ENCODE measurements at regions of chr12 and their contacts with region 1.

Region 1: GRCh38 chr12:9813821-9814809 is 13.2 kb upstream of the KLRF1 start:
- DNase-seq: peak; percentile 82 to 92 (median 87)
- H3K4me3 ChIP-seq: peak overlapping the region; percentile 54
- H3K4me3 Mint-ChIP-seq: peak overlapping the region; percentile 81 to 93 (median 87)
- H3K27ac ChIP-seq: no peak overlapping the region
- H3K27ac Mint-ChIP-seq: peak overlapping the region; percentile 51 to 90 (median 84)
- H3K4me1 ChIP-seq: peaks cover 6% of the 10 kb centered on the region
- H3K4me1 Mint-ChIP-seq: peaks cover 10 to 18% (median 12%) of the 10 kb centered on the region in 3 donors
- H3K27me3 ChIP-seq: no peaks in the 10 kb centered on the region
- H3K27me3 Mint-ChIP-seq: peaks cover 3 to 20% of the 10 kb centered on the region in 2 donors

Region 2: GRCh38 chr12:9750276-9751203 is 63.6 kb before region 1 on chr12:
- CTCF ChIA-PET with region 1: interaction called, 104 read pairs
- POLR2A ChIA-PET with region 1: interaction called, 5 read pairs
- DNase-seq: peak; percentile 26 to 75 (median 65)
- H3K4me3 ChIP-seq: no peak overlapping the region
- H3K4me3 Mint-ChIP-seq: peak overlapping the region; percentile 28 to 74 (median 66)
- H3K27ac ChIP-seq: no peak overlapping the region
- H3K27ac Mint-ChIP-seq: peak overlapping the region in 6 of 8 donors; percentile 11 to 88 (median 58)
- H3K4me1 ChIP-seq: peaks cover 49% of the 10 kb centered on the region
- H3K4me1 Mint-ChIP-seq: peaks cover 47 to 54% (median 54%) of the 10 kb centered on the region in 3 donors
- H3K27me3 ChIP-seq: no peaks in the 10 kb centered on the region
- H3K27me3 Mint-ChIP-seq: peaks cover 0 to 2% of the 10 kb centered on the region in 2 donors

Region 3: GRCh38 chr12:9797722-9798619 is 16.1 kb before region 1 on chr12:
- CTCF ChIA-PET with region 1: interaction called, 34 read pairs
- POLR2A ChIA-PET with region 1: interaction called, 4 read pairs
- DNase-seq: peak; percentile 26 to 83 (median 71)
- H3K4me3 ChIP-seq: no peak overlapping the region
- H3K4me3 Mint-ChIP-seq: peak overlapping the region in 4 of 7 donors; percentile 11 to 38 (median 25)
- H3K27ac ChIP-seq: no peak overlapping the region
- H3K27ac Mint-ChIP-seq: peak overlapping the region in 6 of 8 donors; percentile 1 to 96 (median 76)
- H3K4me1 ChIP-seq: peaks cover 52% of the 10 kb centered on the region
- H3K4me1 Mint-ChIP-seq: peaks cover 48 to 54% (median 48%) of the 10 kb centered on the region in 3 donors
- H3K27me3 ChIP-seq: no peaks in the 10 kb centered on the region
- H3K27me3 Mint-ChIP-seq: no peaks in the 10 kb centered on the region

Region 4: GRCh38 chr12:9925708-9926393 is 111.7 kb after region 1 on chr12:
- CTCF ChIA-PET with region 1: interaction called, 52 read pairs
- POLR2A ChIA-PET with region 1: interaction called, 5 read pairs
- DNase-seq: peak in 2 of 5 donors; percentile 32 to 53
- H3K4me3 ChIP-seq: peak overlapping the region; percentile 19
- H3K4me3 Mint-ChIP-seq: peak overlapping the region in 6 of 7 donors; percentile 62 to 91 (median 78)
- H3K27ac ChIP-seq: no peak overlapping the region
- H3K27ac Mint-ChIP-seq: peak overlapping the region in 3 of 8 donors; percentile 0 to 75 (median 38)
- H3K4me1 ChIP-seq: no peaks in the 10 kb centered on the region
- H3K4me1 Mint-ChIP-seq: peaks cover 9 to 11% (median 10%) of the 10 kb centered on the region in 3 donors
- H3K27me3 ChIP-seq: no peaks in the 10 kb centered on the region
- H3K27me3 Mint-ChIP-seq: peaks cover 0 to 6% of the 10 kb centered on the region in 2 donors

Region 5: GRCh38 chr12:9977916-9978315 is 163.8 kb after region 1 on chr12:
- CTCF ChIA-PET with region 1: no interaction called
- POLR2A ChIA-PET with region 1: no interaction called
- DNase-seq: no peak
- H3K4me3 ChIP-seq: no peak overlapping the region
- H3K4me3 Mint-ChIP-seq: no peak overlapping the region
- H3K27ac ChIP-seq: no peak overlapping the region
- H3K27ac Mint-ChIP-seq: no peak overlapping the region
- H3K4me1 ChIP-seq: no peaks in the 10 kb centered on the region
- H3K4me1 Mint-ChIP-seq: no peaks in the 10 kb centered on the region
- H3K27me3 ChIP-seq: no peaks in the 10 kb centered on the region
- H3K27me3 Mint-ChIP-seq: peaks cover 12 to 36% of the 10 kb centered on the region in 2 donors

Measured in CD8-positive, alpha-beta memory T cell (primary cell).